Heart left ventricle (tissue), 16 donors: ENCODE measurements at regions of chr17 and their contacts with region 1.

Region 1: GRCh38 chr17:80147035-80147836 is at the start of gene EIF4A3:
- DNase-seq: peak; percentile 98 to 99 (median 99)
- ATAC-seq: peak; percentile 98 to 99 (median 99)
- H3K4me3 ChIP-seq: peak within 1 kb of the TSS; percentile 69 to 100 (median 97)
- H3K27ac ChIP-seq: peak within 1 kb of the TSS; percentile 80 to 99 (median 95)
- H3K4me1 ChIP-seq: peaks cover 0 to 32% (median 22%) of the 10 kb centered on the region in 12 donors
- H3K27me3 ChIP-seq: no peaks in the 10 kb centered on the region
- CTCF ChIP-seq: peak in 6 of 12 donors; percentile 1 to 25 (median 18)
- POLR2A ChIP-seq: peak in 1 of 2 donors; percentile 98
- total RNA-seq, gene EIF4A3: 20.4 to 45.1 (median 31.6) TPM

Region 2: DNA sequence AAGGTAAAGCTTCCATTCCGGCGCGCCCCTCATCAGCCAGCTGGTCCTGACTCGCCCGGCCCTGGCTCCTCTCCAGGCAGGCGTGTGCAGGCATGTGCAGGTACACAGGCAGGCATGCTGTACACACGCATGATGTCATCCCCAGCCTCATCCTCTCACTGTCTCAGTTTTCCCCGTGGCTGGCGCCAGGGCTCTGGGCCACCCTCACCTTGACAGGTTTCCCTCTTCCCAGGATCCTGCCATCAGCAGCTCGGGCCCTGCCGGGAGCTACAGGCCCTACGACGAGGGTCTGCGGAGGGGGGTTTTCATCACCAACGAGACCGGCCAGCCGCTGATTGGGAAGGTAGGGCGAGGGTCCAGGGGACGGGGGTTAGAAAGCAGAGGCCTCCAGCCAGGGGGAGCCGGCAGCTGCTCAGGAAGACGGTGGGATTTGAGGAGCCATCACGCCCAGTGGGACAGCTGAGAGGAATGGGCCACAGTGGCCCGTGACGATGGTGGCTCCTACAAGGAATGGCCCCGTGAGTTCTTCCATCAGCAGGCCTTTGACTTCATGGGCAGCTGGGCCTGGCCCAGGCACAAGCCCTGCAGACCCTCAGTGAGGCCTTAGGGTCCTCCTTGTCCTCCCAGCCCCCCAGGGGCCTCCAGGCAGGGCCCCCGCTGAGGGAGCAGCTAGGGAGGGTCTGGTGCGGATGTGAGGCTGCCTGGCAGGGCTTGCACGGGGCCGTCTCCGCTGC is 37.4 kb before region 1 on chr17:
- intact Hi-C with region 1: no loop called
- DNase-seq: no peak
- ATAC-seq: no peak
- H3K4me3 ChIP-seq: no peak overlapping the region
- H3K27ac ChIP-seq: no peak overlapping the region
- H3K4me1 ChIP-seq: no peaks in the 10 kb centered on the region
- H3K27me3 ChIP-seq: no peaks in the 10 kb centered on the region
- CTCF ChIP-seq: no peak
- POLR2A ChIP-seq: no peak

Region 3: GRCh38 chr17:80187515-80187941 is 40.3 kb after region 1 on chr17:
- intact Hi-C with region 1: loop called in 3 of 10 experiments (anchors 5 to 10 kb)
- DNase-seq: peak; percentile 64 to 77 (median 72)
- ATAC-seq: peak in 3 of 4 donors; percentile 83 to 91 (median 84)
- H3K4me3 ChIP-seq: peak overlapping the region in 10 of 12 donors; percentile 8 to 33 (median 26)
- H3K27ac ChIP-seq: peak overlapping the region in 9 of 12 donors; percentile 33 to 61 (median 46)
- H3K4me1 ChIP-seq: peaks cover 0 to 30% (median 18%) of the 10 kb centered on the region in 12 donors
- H3K27me3 ChIP-seq: peaks cover 0 to 4% (median 0%) of the 10 kb centered on the region in 9 donors
- CTCF ChIP-seq: no peak
- POLR2A ChIP-seq: no peak

Region 4: DNA sequence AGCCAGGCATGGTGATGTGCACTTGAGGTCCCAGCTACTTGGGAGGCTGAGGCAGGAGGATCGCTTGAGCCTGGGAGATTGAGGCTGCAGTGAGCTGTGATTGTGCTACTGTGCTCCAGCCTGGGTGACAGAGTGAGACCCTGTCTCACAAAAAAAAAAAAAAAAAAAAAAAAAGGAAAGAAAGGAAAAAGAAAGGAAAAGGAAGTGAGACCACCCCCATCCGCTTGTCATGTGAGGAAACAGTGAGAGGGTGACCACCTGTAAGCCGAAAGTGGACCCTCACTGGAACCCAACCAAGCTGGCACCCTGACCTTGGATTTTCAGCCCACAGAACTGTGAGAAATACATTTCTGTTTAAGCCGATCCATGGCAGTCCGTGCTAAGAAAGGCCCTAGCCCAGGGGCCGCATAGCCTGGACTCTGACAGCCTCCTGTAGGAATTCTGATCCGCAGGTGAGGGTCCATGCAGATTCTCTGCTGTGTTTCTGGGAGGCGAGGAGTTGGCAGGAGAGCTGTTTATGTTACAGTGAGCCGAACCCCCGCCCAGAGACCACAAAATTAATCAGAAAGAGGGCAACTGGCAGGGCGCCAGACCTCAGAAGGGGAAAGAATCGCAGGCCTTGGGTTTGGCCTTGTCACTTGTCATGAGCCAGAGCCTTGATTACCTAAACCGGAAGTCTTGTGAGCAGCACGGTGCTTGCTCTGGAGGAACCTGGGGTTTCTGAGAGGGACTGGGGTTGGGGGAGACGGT is 72.0 kb after region 1 on chr17:
- intact Hi-C with region 1: loop called in 3 of 10 experiments (anchors 2 to 5 kb)
- DNase-seq: peak; percentile 61 to 86 (median 69)
- ATAC-seq: peak in 3 of 4 donors; percentile 49 to 69 (median 55)
- H3K4me3 ChIP-seq: peak overlapping the region; percentile 79 to 100 (median 96)
- H3K27ac ChIP-seq: peak overlapping the region; percentile 49 to 92 (median 78)
- H3K4me1 ChIP-seq: peaks cover 0 to 31% (median 15%) of the 10 kb centered on the region in 12 donors
- H3K27me3 ChIP-seq: no peaks in the 10 kb centered on the region
- CTCF ChIP-seq: no peak
- POLR2A ChIP-seq: no peak

Region 5: GRCh38 chr17:80263253-80264204 is 116.3 kb after region 1 on chr17:
- intact Hi-C with region 1: loop called in 8 of 10 experiments (anchors 2 to 10 kb)
- DNase-seq: peak; percentile 83 to 91 (median 89)
- ATAC-seq: peak; percentile 46 to 85 (median 62)
- H3K4me3 ChIP-seq: peak overlapping the region; percentile 17 to 99 (median 55)
- H3K27ac ChIP-seq: peak overlapping the region; percentile 45 to 100 (median 98)
- H3K4me1 ChIP-seq: peaks cover 6 to 79% (median 32%) of the 10 kb centered on the region in 12 donors
- H3K27me3 ChIP-seq: no peaks in the 10 kb centered on the region
- CTCF ChIP-seq: peak in 3 of 12 donors; percentile 12 to 31 (median 22)
- POLR2A ChIP-seq: peak in 1 of 2 donors; percentile 58